ENCODE measurements at regions of chr22 and their contacts with region 1.

Region 1: GRCh38 chr22:43036282-43036829 is 21.4 kb upstream of the PACSIN2 start:
- DNase-seq: no peak
- H3K4me3 ChIP-seq: no peak overlapping the region
- H3K27ac ChIP-seq: peak overlapping the region in 2 of 4 donors; percentile 20 to 37
- H3K4me1 ChIP-seq: peaks cover 0 to 9% (median 5%) of the 10 kb centered on the region in 4 donors
- H3K27me3 ChIP-seq: no peaks in the 10 kb centered on the region
- CTCF ChIP-seq: no peak
- EP300 ChIP-seq: no peak
- POLR2A ChIP-seq: no peak

Region 2: DNA sequence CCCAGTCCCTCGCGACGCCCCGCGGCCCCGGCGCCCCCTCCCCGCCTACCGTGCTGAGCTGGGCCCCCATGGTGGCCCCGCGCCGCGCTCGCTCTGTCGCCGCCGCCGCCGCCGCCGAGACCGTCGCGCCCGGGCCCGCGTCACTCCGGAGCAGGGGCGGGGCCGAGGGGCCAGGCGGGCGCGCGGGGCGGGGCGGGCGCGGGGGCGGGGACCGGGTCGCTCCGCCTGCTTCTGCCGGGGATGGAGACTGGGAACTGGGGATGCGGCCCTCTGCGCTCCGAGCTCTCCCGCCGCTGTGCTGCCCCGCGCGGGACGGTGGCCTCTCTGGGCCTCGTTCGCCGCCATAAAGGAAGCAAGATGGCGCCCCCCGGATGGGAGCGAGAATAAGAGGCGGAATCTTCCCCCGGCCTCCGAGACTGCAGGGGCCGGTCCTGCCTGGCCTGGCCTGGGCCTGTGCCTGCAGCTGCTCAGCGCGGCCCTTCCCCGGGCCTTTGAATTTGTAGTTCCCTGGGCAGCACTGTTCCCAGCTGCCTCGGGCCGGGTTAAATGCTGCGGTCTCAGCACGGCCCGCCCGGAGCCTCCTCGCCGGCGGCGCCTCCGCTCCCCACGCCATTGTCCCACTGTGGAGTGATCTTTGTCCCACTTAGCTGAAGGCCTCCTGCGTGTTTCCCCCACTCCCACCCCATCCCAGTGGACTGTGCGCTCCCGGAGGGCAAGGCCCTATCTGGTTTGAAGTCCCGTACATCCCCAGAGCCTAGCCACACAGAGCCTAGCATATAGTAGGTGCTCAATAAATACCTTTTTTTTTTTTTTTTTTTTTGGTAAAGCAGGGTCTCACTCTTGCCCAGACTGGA is 386.9 kb before region 1 on chr22 and contains the start of gene CYB5R3:
- in situ Hi-C with region 1: loop called in 2 of 4 experiments (anchors 25 kb)
- intact Hi-C with region 1: no loop called
- DNase-seq: peak; percentile 88
- H3K4me3 ChIP-seq: peak within 1 kb of the TSS; percentile 58 to 89 (median 76)
- H3K27ac ChIP-seq: peak within 1 kb of the TSS; percentile 90 to 98 (median 95)
- H3K4me1 ChIP-seq: peaks cover 38 to 46% (median 44%) of the 10 kb centered on the region in 4 donors
- H3K27me3 ChIP-seq: no peaks in the 10 kb centered on the region
- CTCF ChIP-seq: no peak
- EP300 ChIP-seq: no peak
- POLR2A ChIP-seq: no peak
- total RNA-seq, gene CYB5R3: 138 to 294 (median 167) TPM

Region 3: GRCh38 chr22:42856865-42857704 is 179.3 kb before region 1 on chr22 and contains the start of gene ARFGAP3:
- in situ Hi-C with region 1: loop called in 2 of 4 experiments (anchors 10 to 25 kb)
- intact Hi-C with region 1: no loop called
- DNase-seq: peak; percentile 96
- H3K4me3 ChIP-seq: peak within 1 kb of the TSS; percentile 35 to 87 (median 85)
- H3K27ac ChIP-seq: peak within 1 kb of the TSS; percentile 94 to 98 (median 97)
- H3K4me1 ChIP-seq: peaks cover 7 to 25% (median 20%) of the 10 kb centered on the region in 4 donors
- H3K27me3 ChIP-seq: no peaks in the 10 kb centered on the region
- CTCF ChIP-seq: no peak
- EP300 ChIP-seq: no peak
- POLR2A ChIP-seq: peak; percentile 81
- total RNA-seq, gene ARFGAP3: 24.3 to 43.5 (median 33.3) TPM

Region 4: GRCh38 chr22:42863349-42863961 is 172.9 kb before region 1 on chr22:
- in situ Hi-C with region 1: loop called in 2 of 4 experiments (anchors 10 to 25 kb)
- intact Hi-C with region 1: loop called (anchors 5 kb)
- DNase-seq: no peak
- H3K4me3 ChIP-seq: no peak overlapping the region
- H3K27ac ChIP-seq: no peak overlapping the region
- H3K4me1 ChIP-seq: peaks cover 0 to 4% (median 1%) of the 10 kb centered on the region in 4 donors
- H3K27me3 ChIP-seq: no peaks in the 10 kb centered on the region
- CTCF ChIP-seq: no peak
- EP300 ChIP-seq: no peak
- POLR2A ChIP-seq: no peak

Region 5: GRCh38 chr22:42868751-42869251 is 167.6 kb before region 1 on chr22:
- in situ Hi-C with region 1: loop called in 2 of 4 experiments (anchors 10 to 25 kb)
- intact Hi-C with region 1: loop called (anchors 5 kb)
- DNase-seq: peak; percentile 45
- H3K4me3 ChIP-seq: no peak overlapping the region
- H3K27ac ChIP-seq: peak overlapping the region; percentile 10 to 66 (median 30)
- H3K4me1 ChIP-seq: peaks cover 0 to 10% (median 4%) of the 10 kb centered on the region in 4 donors
- H3K27me3 ChIP-seq: no peaks in the 10 kb centered on the region
- CTCF ChIP-seq: no peak
- EP300 ChIP-seq: no peak
- POLR2A ChIP-seq: no peak

Region 6: DNA sequence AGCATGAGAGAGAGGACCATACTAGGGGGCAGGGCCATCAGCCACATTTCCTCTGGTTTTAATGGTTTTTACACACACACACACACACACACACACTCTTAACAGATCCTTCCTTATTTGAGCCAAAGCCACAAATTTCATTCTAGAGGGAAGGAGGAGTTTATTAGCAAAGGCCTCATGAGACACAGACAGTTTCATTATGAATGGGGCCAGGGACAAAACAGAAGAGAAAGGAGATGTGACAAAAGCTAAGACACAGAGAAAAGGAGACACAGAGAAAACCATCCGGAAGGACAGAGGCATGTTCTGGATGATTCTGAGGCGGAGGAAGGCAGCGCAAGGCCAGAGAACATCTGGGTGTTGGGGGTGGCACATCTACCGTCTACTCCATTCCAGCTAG is 147.1 kb before region 1 on chr22:
- in situ Hi-C with region 1: loop called in 1 of 4 experiments (anchors 10 kb)
- intact Hi-C with region 1: no loop called
- DNase-seq: no peak
- H3K4me3 ChIP-seq: no peak overlapping the region
- H3K27ac ChIP-seq: peak overlapping the region in 3 of 4 donors; percentile 34 to 73 (median 42)
- H3K4me1 ChIP-seq: peaks cover 6 to 51% (median 12%) of the 10 kb centered on the region in 4 donors
- H3K27me3 ChIP-seq: no peaks in the 10 kb centered on the region
- CTCF ChIP-seq: no peak
- EP300 ChIP-seq: no peak
- POLR2A ChIP-seq: no peak

Region 7: DNA sequence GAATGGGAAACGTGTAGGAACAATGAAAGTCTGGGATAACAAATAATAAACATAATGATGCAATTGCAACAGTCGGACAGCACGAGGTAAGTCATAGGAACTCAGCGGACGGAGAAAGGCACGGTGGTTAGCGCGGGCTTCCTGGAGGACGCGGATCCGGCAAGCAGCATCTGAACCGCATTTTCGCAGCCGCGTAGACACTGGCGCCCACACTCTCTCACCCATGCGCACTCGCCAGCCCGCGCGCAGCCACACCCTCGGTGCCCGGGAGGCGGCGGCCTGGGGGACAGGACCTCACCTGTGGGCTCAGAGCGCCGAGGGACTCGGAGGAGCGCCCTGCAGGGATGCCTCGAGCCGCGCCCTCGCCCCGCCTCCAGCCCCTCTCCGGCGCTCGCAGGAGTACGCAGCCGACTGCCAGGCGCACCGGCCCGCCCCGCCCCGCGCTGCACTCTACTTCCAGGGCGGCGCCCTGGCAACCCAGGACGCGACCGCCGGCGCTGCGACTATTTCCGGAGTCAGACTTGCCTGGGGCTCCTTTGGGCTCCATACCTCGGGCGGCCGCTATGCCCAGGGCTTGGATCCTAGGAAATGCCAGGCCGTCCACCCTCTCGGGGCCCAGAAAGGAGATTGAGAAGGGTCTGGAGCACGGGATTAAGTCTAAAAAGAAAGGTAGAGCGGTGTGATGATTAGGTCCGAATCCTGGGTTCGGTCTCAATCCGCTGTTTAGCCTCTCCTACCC is 52.8 kb after region 1 on chr22 and contains the start of gene TTLL1:
- in situ Hi-C with region 1: no loop called
- intact Hi-C with region 1: no loop called
- DNase-seq: peak; percentile 93
- H3K4me3 ChIP-seq: peak within 1 kb of the TSS; percentile 54 to 67 (median 63)
- H3K27ac ChIP-seq: peak within 1 kb of the TSS; percentile 61 to 87 (median 81)
- H3K4me1 ChIP-seq: peaks cover 0 to 22% (median 12%) of the 10 kb centered on the region in 4 donors
- H3K27me3 ChIP-seq: no peaks in the 10 kb centered on the region
- CTCF ChIP-seq: peak in 2 of 5 experiments; percentile 28 to 36
- EP300 ChIP-seq: no peak
- POLR2A ChIP-seq: no peak
- total RNA-seq, gene TTLL1: 1.1 to 3.8 (median 2.8) TPM

Region 8: DNA sequence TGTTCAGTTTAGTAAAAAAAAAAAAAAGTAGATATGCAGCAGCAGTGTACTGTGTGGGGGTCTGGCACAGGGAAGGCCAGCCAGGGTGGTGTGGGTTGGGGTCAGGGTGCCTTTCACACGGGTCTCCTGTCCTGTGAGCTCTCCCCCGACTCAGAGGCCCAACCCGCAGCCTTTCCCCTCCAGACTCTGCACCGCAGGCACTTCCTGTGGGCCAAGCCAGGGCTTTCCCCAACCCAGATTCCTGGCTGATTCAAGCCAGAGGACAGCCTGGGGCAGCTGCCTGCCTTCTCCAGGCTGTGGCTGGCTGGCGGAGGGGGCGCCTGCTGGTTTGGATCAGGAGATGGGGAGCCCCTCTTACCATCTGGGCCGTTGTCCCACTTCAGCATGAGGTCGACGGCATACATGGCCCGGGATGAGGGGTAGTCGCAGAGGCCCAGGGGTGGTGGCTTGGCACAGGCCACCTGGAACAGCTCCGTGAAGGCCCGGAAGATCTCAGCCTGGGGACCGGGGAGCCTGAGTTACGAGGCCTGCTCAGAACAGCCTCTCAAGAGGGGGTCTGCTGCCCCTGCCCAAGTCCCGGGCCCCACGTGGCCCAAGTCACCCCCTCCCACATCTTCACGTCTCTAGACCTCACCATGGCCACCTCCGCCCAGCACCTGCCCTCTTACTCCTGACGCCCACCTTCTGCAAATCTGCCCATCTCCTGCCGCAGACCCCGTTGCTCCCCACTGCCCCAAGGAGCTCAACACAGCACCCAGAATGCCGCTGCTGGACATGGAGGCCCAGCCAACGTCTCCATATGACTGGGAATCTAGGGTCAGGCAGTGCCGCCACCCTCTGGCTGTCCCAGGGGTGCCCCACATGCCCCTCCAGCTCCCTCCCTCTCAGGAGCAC is 132.3 kb after region 1 on chr22:
- in situ Hi-C with region 1: no loop called
- intact Hi-C with region 1: no loop called
- DNase-seq: no peak
- H3K4me3 ChIP-seq: no peak overlapping the region
- H3K27ac ChIP-seq: no peak overlapping the region
- H3K4me1 ChIP-seq: peaks cover 0 to 19% (median 17%) of the 10 kb centered on the region in 4 donors
- H3K27me3 ChIP-seq: no peaks in the 10 kb centered on the region
- CTCF ChIP-seq: no peak
- EP300 ChIP-seq: no peak
- POLR2A ChIP-seq: no peak